Cardiac septum (tissue), 1 donor: ENCODE measurements at regions of chr3 and their contacts with region 1.

Region 1: DNA sequence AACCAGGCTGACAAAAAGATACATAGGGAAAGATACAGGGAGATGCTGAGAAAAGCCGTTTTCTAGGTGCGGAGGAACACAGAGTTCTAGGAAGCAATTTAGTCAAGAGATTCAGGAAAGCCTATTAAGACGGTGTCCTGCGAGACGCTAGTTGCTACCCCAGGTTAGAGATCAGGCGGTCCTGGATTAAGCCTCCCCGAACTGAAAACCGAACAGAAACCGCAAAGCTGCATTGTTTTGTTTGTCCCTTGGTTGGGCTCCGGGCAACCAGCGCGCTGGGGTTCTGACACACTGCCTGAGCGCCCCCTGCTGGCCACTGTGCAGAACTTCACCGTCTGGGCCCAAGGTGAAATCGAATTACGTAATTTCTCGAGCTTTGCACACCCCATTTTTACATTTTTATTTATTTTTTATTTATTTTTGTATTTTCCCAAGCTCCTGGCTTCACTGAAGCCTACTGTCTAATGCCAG is 37.3 kb upstream of the NDUFB4 start:
- DNase-seq: peak; percentile 94

Region 2: GRCh38 chr3:120245386-120245785 is 313.4 kb before region 1 on chr3:
- intact Hi-C with region 1: loop called (anchors 2 kb)
- DNase-seq: no peak

Region 3: DNA sequence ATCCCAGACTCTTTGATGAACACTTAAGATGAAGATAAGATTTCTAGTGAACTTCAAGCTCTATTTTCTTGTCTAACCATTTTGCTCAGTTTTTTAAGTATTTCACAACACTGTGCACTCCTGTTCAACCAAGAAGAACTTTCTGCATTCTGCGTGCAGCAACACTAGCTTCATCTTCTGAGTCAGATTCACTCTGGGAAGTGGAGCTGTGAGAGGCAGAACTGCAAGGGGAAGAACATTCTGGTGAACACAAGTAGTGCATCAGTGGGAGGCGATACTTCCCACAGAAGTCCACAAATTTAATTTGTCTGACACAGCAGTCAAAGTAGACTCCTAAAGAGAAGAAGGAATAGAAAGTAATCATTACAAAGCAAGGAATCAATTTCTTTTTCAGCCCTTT is 227.7 kb before region 1 on chr3:
- intact Hi-C with region 1: no loop called
- DNase-seq: no peak

Region 4: DNA sequence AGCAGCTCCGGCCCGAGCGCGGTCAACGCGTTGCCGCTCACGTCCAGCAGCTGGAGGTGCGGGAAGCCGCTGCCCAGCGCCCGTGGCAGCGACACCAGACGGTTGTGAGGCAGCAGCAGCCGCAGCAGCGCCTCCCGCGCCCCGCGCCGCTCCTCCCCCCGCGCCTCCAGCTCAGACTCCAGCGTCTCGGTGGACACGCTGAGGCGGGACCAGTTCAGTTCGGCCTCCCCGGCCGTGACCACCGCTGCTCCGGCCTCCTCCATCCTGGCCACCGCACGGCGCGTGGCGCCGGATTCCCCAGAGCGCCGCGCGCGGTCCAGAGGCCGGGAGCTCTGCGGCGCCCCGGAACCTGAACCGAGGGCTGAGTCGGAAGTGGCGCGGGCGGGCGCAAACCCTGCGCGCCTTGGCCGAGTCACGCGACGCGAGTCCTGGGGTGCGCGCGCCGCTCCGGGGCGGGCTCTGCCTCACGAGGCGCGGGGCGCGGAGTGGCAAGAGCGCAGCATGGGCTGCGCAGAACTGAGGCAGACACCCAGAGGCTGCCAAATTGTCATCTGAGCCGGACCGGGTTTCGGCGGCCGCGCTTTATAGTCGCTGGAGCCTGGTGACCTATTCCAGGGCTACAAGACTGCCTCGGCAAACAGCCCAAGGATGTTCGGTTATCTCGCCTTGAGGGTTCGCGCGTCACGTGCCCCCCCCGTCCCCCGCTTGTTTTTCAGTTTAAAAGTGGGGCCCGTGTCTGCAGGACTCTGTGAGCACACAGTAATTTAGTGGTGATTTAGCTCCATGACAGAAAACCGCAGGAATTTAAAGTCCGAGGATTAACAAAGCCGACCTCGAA is 209.6 kb before region 1 on chr3 and contains the start of gene LRRC58:
- intact Hi-C with region 1: loop called (anchors 5 kb)
- DNase-seq: peak; percentile 93
- total RNA-seq, gene LRRC58: 8.1 TPM

Region 5: GRCh38 chr3:120450600-120451271 is 108.1 kb before region 1 on chr3 and contains the start of gene FSTL1:
- intact Hi-C with region 1: loop called (anchors 1 kb)
- DNase-seq: peak; percentile 82
- total RNA-seq, gene FSTL1: 140 TPM

Region 6: GRCh38 chr3:120470870-120471269 is 87.9 kb before region 1 on chr3:
- intact Hi-C with region 1: loop called (anchors 5 kb)
- DNase-seq: no peak

Region 7: DNA sequence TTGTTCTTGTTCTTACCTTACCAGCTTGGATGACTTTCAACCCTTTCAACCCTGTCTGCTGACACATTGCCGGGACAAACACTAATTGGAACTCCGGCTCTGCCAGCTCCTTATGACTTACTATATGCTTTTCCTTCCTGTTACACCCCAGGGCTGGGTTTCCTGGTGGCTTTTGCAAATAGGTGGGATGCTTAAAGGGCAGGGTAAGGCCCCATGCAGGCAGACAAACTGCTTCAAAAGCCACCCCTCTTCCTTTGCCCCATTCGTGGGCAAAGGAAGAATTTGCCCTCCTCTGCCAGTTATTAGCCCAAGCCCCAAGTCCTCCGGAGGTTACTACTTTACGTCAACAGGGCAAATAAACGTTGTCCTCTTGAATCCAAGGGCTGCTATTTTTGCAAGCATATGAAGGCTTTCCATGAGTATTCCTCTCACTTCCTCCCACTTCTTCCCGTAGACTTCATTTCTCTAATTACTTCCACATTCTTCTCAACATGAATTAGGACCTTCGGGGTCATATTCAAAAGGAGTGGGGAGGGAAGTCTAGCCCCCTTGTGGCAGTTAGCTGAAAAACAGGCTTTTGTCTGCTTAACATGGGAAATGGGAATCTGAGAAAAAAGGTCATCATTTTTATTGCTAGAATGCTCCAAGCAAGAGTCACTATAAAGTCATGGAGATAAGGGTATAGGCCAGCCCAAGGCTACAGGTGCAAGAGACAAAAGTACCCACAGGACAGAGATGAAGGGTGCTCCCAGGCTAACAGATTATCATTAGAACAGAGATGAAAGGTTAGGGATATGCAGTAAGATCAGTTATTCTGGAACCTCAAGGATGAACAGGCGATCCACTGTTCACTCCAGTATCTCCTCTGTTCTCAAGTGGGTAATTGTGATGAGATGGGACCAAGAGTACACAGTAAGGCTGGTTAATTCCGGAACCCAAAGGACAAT is 51.7 kb before region 1 on chr3:
- intact Hi-C with region 1: loop called (anchors 5 kb)
- DNase-seq: no peak

Region 8: GRCh38 chr3:120763601-120764000 is 204.8 kb after region 1 on chr3:
- intact Hi-C with region 1: no loop called
- DNase-seq: no peak

Region 9: GRCh38 chr3:120795017-120795648 is 236.3 kb after region 1 on chr3:
- intact Hi-C with region 1: loop called (anchors 1 kb)
- DNase-seq: peak; percentile 84